Activated B cell treated with CpG ODN at 0.5 μM for 24 hours (primary cell): ENCODE measurements at regions of chr4 and their contacts with region 1.

Region 1: DNA sequence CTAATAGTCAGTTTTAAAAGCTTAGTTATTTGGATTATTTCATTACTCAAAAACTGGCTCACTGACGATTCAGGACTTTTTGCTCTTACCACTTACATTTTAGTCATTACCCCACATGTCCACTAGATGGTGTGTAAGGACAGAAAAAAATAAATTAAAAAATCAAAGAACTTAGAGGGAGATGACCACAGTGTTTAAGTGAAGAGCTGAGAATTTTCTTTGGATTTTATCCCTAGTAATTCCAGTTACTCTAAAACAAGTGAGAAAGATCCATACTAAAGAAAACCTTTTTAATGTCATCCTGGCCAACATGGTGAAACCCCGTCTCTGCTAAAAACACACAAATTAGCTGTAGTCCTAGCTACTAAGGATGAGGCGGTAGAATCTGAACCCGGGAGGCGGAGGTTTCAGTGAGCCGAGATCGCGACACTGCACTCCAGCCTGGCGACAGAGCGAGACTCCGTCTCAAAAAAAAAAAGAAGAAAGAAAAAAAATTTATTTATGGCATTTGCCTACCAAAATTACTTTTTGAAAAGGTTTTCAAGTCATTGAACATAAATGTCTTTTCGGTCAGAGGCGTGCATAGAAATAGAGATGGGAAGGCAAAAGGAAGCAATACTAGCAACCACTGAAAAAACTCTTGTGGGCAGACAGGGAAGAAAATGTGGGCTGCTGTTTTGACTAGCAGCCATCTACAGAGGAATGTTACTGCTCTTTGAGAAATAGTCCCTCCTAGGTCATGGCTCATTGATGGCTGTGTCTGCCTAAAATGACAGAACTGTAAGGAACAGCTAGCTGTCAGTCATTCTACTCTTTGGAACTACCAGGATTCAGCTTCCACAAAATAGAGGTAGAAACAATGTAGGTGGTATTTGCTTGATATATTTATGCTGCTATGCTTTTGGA is 26.6 kb upstream of the TMPRSS11B start:
- DNase-seq: no peak
- ATAC-seq: peak; percentile 52
- H3K4me3 Mint-ChIP-seq: no peak overlapping the region
- H3K27ac Mint-ChIP-seq: no peak overlapping the region
- H3K4me1 Mint-ChIP-seq: peaks cover 14% of the 10 kb centered on the region
- H3K27me3 Mint-ChIP-seq: peaks cover 7% of the 10 kb centered on the region
- CTCF ChIP-seq: peak; percentile 35

Region 2: GRCh38 chr4:68375667-68376559 is 103.8 kb after region 1 on chr4:
- CTCF ChIA-PET with region 1: interaction called, 53 read pairs
- POLR2A ChIA-PET with region 1: interaction called, 3 read pairs
- intact Hi-C with region 1: loop called (anchors 1 kb)
- DNase-seq: no peak
- ATAC-seq: peak; percentile 77
- H3K4me3 Mint-ChIP-seq: peak overlapping the region; percentile 53
- H3K27ac Mint-ChIP-seq: no peak overlapping the region
- H3K4me1 Mint-ChIP-seq: peaks cover 10% of the 10 kb centered on the region
- H3K27me3 Mint-ChIP-seq: peaks cover 13% of the 10 kb centered on the region
- CTCF ChIP-seq: peak; percentile 36

Region 3: DNA sequence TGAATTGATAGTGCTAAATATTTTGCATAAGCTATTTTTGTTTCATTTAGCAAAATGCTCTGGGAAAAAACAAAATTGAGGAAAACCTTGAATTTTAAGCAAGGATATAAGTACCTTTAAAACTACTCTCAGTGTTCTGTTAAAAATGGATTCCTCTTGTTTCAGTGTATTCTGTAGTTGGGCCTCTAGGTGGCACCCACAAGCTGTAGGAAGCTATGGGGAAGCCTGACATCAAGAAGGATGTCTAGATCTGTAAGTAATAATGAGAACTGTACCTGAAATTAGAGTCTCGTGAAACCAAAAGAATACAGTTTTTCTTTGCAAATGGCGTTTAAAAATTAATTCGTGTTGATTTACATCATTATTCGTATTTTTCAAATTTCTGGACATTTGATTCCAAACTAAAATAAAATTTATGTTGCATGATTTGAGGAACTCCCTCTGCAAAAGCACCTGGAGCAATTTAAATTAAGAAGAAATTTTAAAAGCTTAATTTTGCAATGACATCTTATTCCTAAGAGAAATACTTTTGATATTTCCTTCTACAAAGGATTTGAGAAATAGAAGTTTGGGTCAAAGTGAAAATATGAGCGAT is 226.4 kb after region 1 on chr4:
- CTCF ChIA-PET with region 1: interaction called, 3 read pairs
- POLR2A ChIA-PET with region 1: no interaction called
- intact Hi-C with region 1: loop called (anchors 1 kb)
- DNase-seq: no peak
- ATAC-seq: peak; percentile 80
- H3K4me3 Mint-ChIP-seq: no peak overlapping the region
- H3K27ac Mint-ChIP-seq: no peak overlapping the region
- H3K4me1 Mint-ChIP-seq: peaks cover 9% of the 10 kb centered on the region
- H3K27me3 Mint-ChIP-seq: no peaks in the 10 kb centered on the region
- CTCF ChIP-seq: peak; percentile 51

Region 4: GRCh38 chr4:69881173-69881773 is 1609.2 kb after region 1 on chr4:
- CTCF ChIA-PET with region 1: no interaction called
- POLR2A ChIA-PET with region 1: no interaction called
- intact Hi-C with region 1: loop called (anchors 2 kb)
- DNase-seq: no peak
- ATAC-seq: no peak
- H3K4me3 Mint-ChIP-seq: no peak overlapping the region
- H3K27ac Mint-ChIP-seq: no peak overlapping the region
- H3K4me1 Mint-ChIP-seq: no peaks in the 10 kb centered on the region
- H3K27me3 Mint-ChIP-seq: no peaks in the 10 kb centered on the region
- CTCF ChIP-seq: no peak

Region 5: GRCh38 chr4:70183168-70183939 is 1911.2 kb after region 1 on chr4:
- CTCF ChIA-PET with region 1: no interaction called
- POLR2A ChIA-PET with region 1: no interaction called
- intact Hi-C with region 1: loop called (anchors 5 kb)
- DNase-seq: no peak
- ATAC-seq: no peak
- H3K4me3 Mint-ChIP-seq: no peak overlapping the region
- H3K27ac Mint-ChIP-seq: no peak overlapping the region
- H3K4me1 Mint-ChIP-seq: no peaks in the 10 kb centered on the region
- H3K27me3 Mint-ChIP-seq: no peaks in the 10 kb centered on the region
- CTCF ChIP-seq: no peak